SK-N-SH (cell line): ENCODE measurements at regions of chr3 and their contacts with region 1.

Region 1: GRCh38 chr3:124559881-124560574 is 170.2 kb upstream of the UMPS start:
- DNase-seq: peak; percentile 78
- H3K4me3 ChIP-seq: peak overlapping the region in 1 of 2 experiments; percentile 20; a peak in 1 of 4 replicates
- H3K27ac ChIP-seq: peak overlapping the region; percentile 94 to 97
- H3K4me1 ChIP-seq: peaks cover 27 to 57% of the 10 kb centered on the region in 2 experiments
- H3K27me3 ChIP-seq: no peaks in the 10 kb centered on the region
- CTCF ChIP-seq: peak; percentile 94
- EP300 ChIP-seq: peak in 1 of 2 experiments; percentile 44; a peak in 1 of 4 replicates
- RAD21 ChIP-seq: peak; percentile 90

Region 2: DNA sequence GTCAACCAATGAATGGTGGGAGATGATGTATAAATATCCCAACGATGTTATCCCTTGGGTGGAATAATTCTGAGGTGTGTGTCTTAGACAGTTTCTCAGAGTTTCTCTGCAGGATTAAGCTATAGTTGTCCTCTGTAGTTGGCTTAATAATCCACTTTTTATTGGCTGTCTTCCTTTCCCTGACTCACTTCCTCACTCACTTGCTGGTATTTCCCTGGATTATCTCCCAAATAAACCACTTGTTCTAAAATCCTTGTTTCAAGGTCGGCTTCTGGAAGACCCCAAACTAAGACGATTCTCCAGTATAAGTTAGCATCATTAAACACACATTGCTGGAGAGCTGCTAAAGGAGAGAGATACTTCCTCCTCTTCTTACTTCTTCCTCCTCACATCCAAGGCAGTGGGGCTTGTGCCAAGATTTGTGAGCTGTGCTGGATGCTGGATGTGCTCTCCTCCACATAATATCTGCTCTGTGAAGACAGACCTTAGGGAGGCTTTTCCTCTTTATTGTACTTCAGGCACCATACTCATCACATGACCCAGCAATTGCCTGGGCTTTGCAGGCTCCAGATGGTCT is 545.6 kb before region 1 on chr3:
- CTCF ChIA-PET with region 1: interaction called, 20 read pairs
- POLR2A ChIA-PET with region 1: no interaction called
- DNase-seq: no peak
- H3K4me3 ChIP-seq: no peak overlapping the region
- H3K27ac ChIP-seq: no peak overlapping the region
- H3K4me1 ChIP-seq: peaks cover 0 to 5% of the 10 kb centered on the region in 2 experiments; a peak in 1 of 4 replicates
- H3K27me3 ChIP-seq: no peaks in the 10 kb centered on the region
- CTCF ChIP-seq: no peak
- EP300 ChIP-seq: no peak
- RAD21 ChIP-seq: no peak

Region 3: GRCh38 chr3:124439603-124440002 is 120.4 kb before region 1 on chr3:
- CTCF ChIA-PET with region 1: interaction called, 11 read pairs
- POLR2A ChIA-PET with region 1: no interaction called
- DNase-seq: no peak
- H3K4me3 ChIP-seq: no peak overlapping the region
- H3K27ac ChIP-seq: no peak overlapping the region
- H3K4me1 ChIP-seq: peaks cover 2 to 4% of the 10 kb centered on the region in 2 experiments; a peak in 2 of 4 replicates
- H3K27me3 ChIP-seq: no peaks in the 10 kb centered on the region
- CTCF ChIP-seq: no peak
- EP300 ChIP-seq: no peak
- RAD21 ChIP-seq: no peak

Region 4: GRCh38 chr3:124540550-124541211 is 19.3 kb before region 1 on chr3:
- CTCF ChIA-PET with region 1: interaction called, 26 read pairs
- POLR2A ChIA-PET with region 1: no interaction called
- DNase-seq: no peak
- H3K4me3 ChIP-seq: no peak overlapping the region
- H3K27ac ChIP-seq: no peak overlapping the region
- H3K4me1 ChIP-seq: no peaks in the 10 kb centered on the region
- H3K27me3 ChIP-seq: no peaks in the 10 kb centered on the region
- CTCF ChIP-seq: no peak
- EP300 ChIP-seq: no peak
- RAD21 ChIP-seq: no peak

Region 5: GRCh38 chr3:124676236-124676635 is 116.2 kb after region 1 on chr3:
- CTCF ChIA-PET with region 1: interaction called, 280 read pairs
- POLR2A ChIA-PET with region 1: no interaction called
- DNase-seq: no peak
- H3K4me3 ChIP-seq: no peak overlapping the region
- H3K27ac ChIP-seq: no peak overlapping the region
- H3K4me1 ChIP-seq: no peaks in the 10 kb centered on the region
- H3K27me3 ChIP-seq: no peaks in the 10 kb centered on the region
- CTCF ChIP-seq: no peak
- EP300 ChIP-seq: no peak
- RAD21 ChIP-seq: no peak

Region 6: GRCh38 chr3:124700880-124701684 is 141.1 kb after region 1 on chr3:
- CTCF ChIA-PET with region 1: interaction called, 17 read pairs
- POLR2A ChIA-PET with region 1: no interaction called
- DNase-seq: no peak
- H3K4me3 ChIP-seq: no peak overlapping the region
- H3K27ac ChIP-seq: peak overlapping the region in 1 of 2 experiments; percentile 93; a peak in 2 of 4 replicates
- H3K4me1 ChIP-seq: peaks cover 0 to 27% of the 10 kb centered on the region in 2 experiments; a peak in 1 of 4 replicates
- H3K27me3 ChIP-seq: no peaks in the 10 kb centered on the region
- CTCF ChIP-seq: no peak
- EP300 ChIP-seq: no peak
- RAD21 ChIP-seq: no peak